ENCODE measurements at regions of chr5 and their contacts with region 1.

Region 1: GRCh38 chr5:56838409-56839039 is 23.2 kb downstream of the MAP3K1 start:
- DNase-seq: no peak
- H3K4me3 ChIP-seq: peak overlapping the region in 3 of 4 donors; percentile 17 to 26 (median 24)
- H3K27ac ChIP-seq: peak overlapping the region in 3 of 4 donors; percentile 40 to 60 (median 46)
- H3K4me1 ChIP-seq: peaks cover 35 to 58% (median 55%) of the 10 kb centered on the region in 4 donors
- H3K27me3 ChIP-seq: no peaks in the 10 kb centered on the region
- CTCF ChIP-seq: peak; percentile 58 to 66 (median 63)
- EP300 ChIP-seq: no peak
- POLR2A ChIP-seq: no peak

Region 2: DNA sequence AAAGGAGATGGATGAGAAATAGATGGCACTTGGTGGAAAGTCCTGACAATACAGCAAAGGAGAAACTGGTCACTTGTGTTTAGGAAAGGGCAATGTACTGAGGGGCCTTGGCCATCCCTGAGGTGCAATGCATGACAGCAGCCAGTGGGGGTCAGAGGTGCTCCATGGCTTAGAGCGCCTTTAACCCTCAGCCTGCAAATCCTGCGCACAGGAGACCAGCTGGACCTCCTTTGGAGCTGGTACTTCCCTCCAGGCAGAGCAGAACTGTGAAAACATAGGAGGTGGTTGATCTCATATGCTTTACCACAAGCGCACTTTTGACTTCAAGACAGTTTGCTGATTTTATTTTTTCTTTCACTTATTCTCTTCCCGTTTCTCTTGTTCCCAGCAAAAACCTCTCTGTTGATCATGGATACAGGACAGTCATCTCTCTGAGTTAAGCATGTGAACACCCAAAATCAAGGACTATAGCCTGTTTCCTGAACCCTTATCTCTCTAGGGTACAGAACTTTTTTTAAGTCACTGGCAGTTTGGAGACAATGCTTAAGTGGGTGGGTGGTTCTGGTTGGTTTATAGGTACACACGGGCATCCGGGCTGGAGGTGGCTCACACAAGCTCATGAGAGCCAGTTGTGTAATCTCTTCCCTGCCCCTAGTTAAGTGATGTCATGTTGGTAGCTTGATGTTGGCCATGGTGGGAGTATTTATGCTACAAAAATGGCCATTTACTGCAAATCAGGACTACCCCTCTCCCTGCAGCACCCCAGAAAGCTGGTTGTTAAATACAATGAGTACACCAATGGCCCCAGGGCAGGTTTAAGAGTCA is 567.7 kb before region 1 on chr5:
- intact Hi-C with region 1: loop called (anchors 2 kb)
- DNase-seq: peak; percentile 94
- H3K4me3 ChIP-seq: no peak overlapping the region
- H3K27ac ChIP-seq: no peak overlapping the region
- H3K4me1 ChIP-seq: peaks cover 0 to 13% (median 9%) of the 10 kb centered on the region in 4 donors
- H3K27me3 ChIP-seq: no peaks in the 10 kb centered on the region
- CTCF ChIP-seq: peak; percentile 94 to 98 (median 96)
- EP300 ChIP-seq: no peak
- POLR2A ChIP-seq: no peak

Region 3: DNA sequence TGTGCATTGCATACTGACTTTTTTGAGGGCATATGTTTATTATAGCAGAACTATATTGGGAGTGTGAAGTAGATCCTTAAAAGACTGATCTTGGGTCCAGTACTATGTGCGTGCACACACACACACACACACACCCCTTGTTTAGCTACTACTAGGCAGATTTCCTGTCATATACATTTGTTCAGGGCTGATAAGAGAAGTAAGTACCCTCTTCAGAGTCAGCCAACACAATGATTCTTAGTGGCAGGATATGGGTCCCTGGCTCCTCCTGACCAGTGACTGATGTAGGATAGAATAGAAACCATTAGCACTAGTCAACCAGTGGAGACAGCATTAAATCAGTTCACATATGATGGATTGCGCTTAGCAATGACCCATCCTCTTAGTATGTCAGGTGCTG is 189.6 kb after region 1 on chr5:
- intact Hi-C with region 1: no loop called
- DNase-seq: peak; percentile 62
- H3K4me3 ChIP-seq: no peak overlapping the region
- H3K27ac ChIP-seq: no peak overlapping the region
- H3K4me1 ChIP-seq: no peaks in the 10 kb centered on the region
- H3K27me3 ChIP-seq: peaks cover 0 to 6% (median 0%) of the 10 kb centered on the region in 4 donors
- CTCF ChIP-seq: no peak
- EP300 ChIP-seq: no peak
- POLR2A ChIP-seq: no peak